Sigmoid colon (tissue), 7 donors: ENCODE measurements at regions of chr19 and their contacts with region 1.

Region 1: DNA sequence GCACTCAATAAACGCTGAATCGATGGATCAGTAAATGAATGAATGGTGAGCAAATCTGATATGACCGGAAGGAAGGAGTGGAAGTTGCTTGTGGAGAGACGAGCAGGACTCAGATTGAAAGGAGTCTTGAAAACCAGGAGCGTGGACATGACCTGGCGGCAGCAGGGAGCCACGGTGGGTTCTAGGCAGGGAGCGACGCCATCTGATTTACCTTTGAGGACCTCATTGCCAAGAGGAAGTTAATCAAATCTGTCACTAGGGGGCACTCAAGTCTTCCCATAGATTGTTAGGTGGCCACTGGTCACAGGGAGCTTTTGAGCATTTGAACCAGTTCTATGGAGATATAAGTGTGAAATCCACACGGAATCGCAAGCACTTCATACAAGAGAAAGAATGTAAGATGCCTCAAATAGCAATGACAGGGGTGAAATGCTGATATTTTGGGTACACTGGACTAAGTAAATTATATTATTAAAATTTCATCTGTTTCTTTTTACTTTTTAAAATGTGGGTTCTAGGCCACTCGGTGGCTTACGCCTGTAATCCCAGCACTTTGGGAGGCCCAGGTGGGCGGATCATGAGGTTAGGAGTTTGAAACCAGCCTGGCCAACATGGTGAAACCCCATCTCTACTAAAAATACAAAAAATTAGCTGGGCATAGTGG is 9.2 kb upstream of the FBN3 start:
- DNase-seq: peak; percentile 74
- H3K4me3 ChIP-seq: no peak overlapping the region
- H3K27ac ChIP-seq: no peak overlapping the region
- H3K4me1 ChIP-seq: peaks cover 0 to 18% (median 11%) of the 10 kb centered on the region in 4 donors
- H3K27me3 ChIP-seq: no peaks in the 10 kb centered on the region
- CTCF ChIP-seq: peak; percentile 42 to 62 (median 60)
- EP300 ChIP-seq: no peak
- POLR2A ChIP-seq: no peak

Region 2: DNA sequence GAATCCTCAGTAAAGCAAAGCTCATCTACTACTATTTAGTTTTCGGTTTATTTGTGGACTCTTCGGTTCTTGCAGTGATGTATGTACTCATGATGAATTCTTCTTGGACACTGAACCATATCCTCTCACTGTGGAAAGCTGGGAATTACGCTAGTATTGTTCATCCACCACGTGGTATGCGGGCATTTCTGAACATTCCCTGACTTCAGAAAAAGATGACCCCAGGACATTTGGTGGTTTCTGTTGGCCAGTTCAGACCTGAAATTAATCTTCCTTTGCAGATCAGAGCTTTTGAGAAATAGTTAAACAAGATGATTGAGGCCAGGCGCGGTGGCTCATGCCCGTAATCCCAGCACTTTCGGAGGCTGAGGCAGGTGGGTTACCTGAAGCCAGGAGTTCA is 16.2 kb after region 1 on chr19:
- intact Hi-C with region 1: no loop called
- DNase-seq: no peak
- H3K4me3 ChIP-seq: no peak overlapping the region
- H3K27ac ChIP-seq: no peak overlapping the region
- H3K4me1 ChIP-seq: no peaks in the 10 kb centered on the region
- H3K27me3 ChIP-seq: no peaks in the 10 kb centered on the region
- CTCF ChIP-seq: no peak
- EP300 ChIP-seq: no peak
- POLR2A ChIP-seq: no peak

Region 3: DNA sequence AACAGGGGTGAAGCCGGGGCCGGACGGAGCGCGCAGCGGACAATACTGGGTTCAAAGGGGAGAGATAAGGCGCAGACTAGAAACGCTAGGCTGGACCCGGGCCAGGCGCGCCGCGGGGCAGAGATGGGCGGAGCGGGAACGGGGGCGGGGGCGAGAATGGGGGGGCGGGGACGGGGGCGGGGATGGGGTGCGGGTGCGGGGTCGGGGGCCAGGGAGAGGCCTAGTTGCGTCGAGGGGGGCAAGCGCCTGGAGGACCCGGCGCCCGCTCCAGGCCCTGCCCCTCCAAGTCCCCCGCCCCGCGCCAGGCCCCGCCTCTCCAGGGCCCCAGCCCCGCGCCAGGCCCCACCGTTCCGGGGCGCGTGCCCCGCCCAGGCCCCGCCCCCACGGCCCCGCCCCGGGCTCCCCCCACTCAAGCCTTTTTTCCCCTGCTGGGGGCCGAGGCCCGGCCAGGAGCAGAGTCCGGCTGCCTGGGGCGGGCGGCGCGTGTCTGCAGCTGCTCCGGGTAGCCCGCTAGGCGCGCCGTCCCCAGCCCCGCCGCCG is 50.4 kb after region 1 on chr19 and contains the start of gene CERS4:
- intact Hi-C with region 1: loop called (anchors 5 kb)
- DNase-seq: peak; percentile 90
- H3K4me3 ChIP-seq: peak within 1 kb of the TSS; percentile 68 to 93 (median 78)
- H3K27ac ChIP-seq: peak within 1 kb of the TSS; percentile 70 to 84 (median 79)
- H3K4me1 ChIP-seq: peaks cover 0 to 24% (median 19%) of the 10 kb centered on the region in 4 donors
- H3K27me3 ChIP-seq: no peaks in the 10 kb centered on the region
- CTCF ChIP-seq: no peak
- EP300 ChIP-seq: no peak
- POLR2A ChIP-seq: no peak
- total RNA-seq, gene CERS4: 24.1 to 40.0 (median 30.2) TPM